ENCODE measurements at regions of chr10 and their contacts with region 1.

Region 1: DNA sequence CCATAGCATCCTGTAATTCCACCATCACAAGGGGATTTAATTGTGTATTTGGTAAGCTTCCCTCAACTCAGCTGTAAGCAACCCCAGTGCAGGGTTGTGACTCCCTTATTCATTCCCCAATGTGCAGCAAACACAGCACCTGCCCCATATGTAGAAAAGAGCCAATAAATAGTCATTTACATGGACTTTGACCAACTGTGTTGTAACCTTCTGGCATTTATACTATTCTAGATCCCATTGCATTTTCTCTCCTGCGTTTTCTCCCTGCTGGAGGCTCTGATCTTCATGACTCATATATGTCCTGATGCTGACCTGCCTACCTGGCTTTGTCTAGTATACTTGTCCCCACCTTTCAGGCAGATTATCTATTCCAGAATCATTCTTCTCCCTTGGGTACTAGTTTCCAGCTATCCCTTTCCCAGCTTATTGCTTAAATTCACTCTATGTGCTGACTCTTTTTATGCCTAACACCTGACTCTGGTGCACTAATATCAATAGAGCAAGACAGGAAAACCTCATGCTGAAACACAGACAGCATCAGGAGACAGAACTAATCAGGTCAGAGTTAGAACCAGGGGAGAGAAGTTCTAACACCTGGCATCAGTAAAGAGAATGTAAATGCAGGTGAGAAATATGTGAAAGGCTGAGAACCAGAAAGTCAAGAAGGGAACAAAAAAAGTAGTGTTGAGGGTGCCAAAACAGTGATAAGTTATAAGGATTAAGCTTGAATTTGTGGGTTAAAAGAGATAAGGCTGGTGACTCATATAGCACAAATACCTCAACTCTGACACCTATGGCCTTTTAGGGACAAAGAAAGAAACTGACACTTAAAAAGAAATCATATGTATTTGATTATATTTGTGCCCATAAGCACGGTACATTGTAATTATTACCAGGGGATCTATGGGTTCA is 402.7 kb downstream of the IPMK start:
- DNase-seq: peak; percentile 48
- H3K4me3 Mint-ChIP-seq: peak overlapping the region; percentile 21
- H3K27ac Mint-ChIP-seq: peak overlapping the region; percentile 81
- H3K4me1 Mint-ChIP-seq: peaks cover 64% of the 10 kb centered on the region
- H3K27me3 Mint-ChIP-seq: no peaks in the 10 kb centered on the region
- CTCF ChIP-seq: no peak

Region 2: GRCh38 chr10:57338823-57339558 is 526.0 kb before region 1 on chr10:
- CTCF ChIA-PET with region 1: no interaction called
- intact Hi-C with region 1: loop called (anchors 10 kb)
- DNase-seq: peak; percentile 45
- H3K4me3 Mint-ChIP-seq: no peak overlapping the region
- H3K27ac Mint-ChIP-seq: no peak overlapping the region
- H3K4me1 Mint-ChIP-seq: no peaks in the 10 kb centered on the region
- H3K27me3 Mint-ChIP-seq: no peaks in the 10 kb centered on the region
- CTCF ChIP-seq: peak; percentile 79

Region 3: GRCh38 chr10:57898237-57898636 is 33.2 kb after region 1 on chr10:
- CTCF ChIA-PET with region 1: no interaction called
- intact Hi-C with region 1: loop called (anchors 1 kb)
- DNase-seq: peak; percentile 86
- H3K4me3 Mint-ChIP-seq: peak overlapping the region; percentile 56
- H3K27ac Mint-ChIP-seq: peak overlapping the region; percentile 59
- H3K4me1 Mint-ChIP-seq: peaks cover 41% of the 10 kb centered on the region
- H3K27me3 Mint-ChIP-seq: no peaks in the 10 kb centered on the region
- CTCF ChIP-seq: no peak

Region 4: GRCh38 chr10:58023341-58024073 is 158.5 kb after region 1 on chr10:
- CTCF ChIA-PET with region 1: no interaction called
- intact Hi-C with region 1: loop called (anchors 1 kb)
- DNase-seq: peak; percentile 52
- H3K4me3 Mint-ChIP-seq: peak overlapping the region; percentile 4
- H3K27ac Mint-ChIP-seq: peak overlapping the region; percentile 84
- H3K4me1 Mint-ChIP-seq: peaks cover 34% of the 10 kb centered on the region
- H3K27me3 Mint-ChIP-seq: no peaks in the 10 kb centered on the region
- CTCF ChIP-seq: no peak